ENCODE measurements at regions of chr16 and their contacts with region 1.

Region 1: GRCh38 chr16:28491970-28492474 is at the start of gene CLN3:
- DNase-seq: peak; percentile 96 to 98 (median 97)
- H3K4me3 ChIP-seq: peak within 1 kb of the TSS; percentile 92 to 99 (median 94)
- H3K27ac ChIP-seq: peak within 1 kb of the TSS; percentile 98
- H3K4me1 ChIP-seq: peaks cover 0 to 3% (median 0%) of the 10 kb centered on the region in 3 donors
- H3K27me3 ChIP-seq: no peaks in the 10 kb centered on the region
- CTCF ChIP-seq: no peak
- total RNA-seq, gene CLN3: 35.0 TPM

Region 2: GRCh38 chr16:28549390-28549789 is 57.4 kb after region 1 on chr16:
- intact Hi-C with region 1: loop called (anchors 10 kb)
- DNase-seq: peak in 1 of 5 donors; percentile 46
- H3K4me3 ChIP-seq: no peak overlapping the region
- H3K27ac ChIP-seq: no peak overlapping the region
- H3K4me1 ChIP-seq: peaks cover 0 to under 1% (median 0%) of the 10 kb centered on the region in 3 donors
- H3K27me3 ChIP-seq: no peaks in the 10 kb centered on the region
- CTCF ChIP-seq: peak; percentile 43

Region 3: GRCh38 chr16:28597692-28598261 is 105.8 kb after region 1 on chr16:
- intact Hi-C with region 1: no loop called
- DNase-seq: peak in 4 of 5 donors; percentile 32 to 61 (median 54)
- H3K4me3 ChIP-seq: no peak overlapping the region
- H3K27ac ChIP-seq: no peak overlapping the region
- H3K4me1 ChIP-seq: peaks cover 0 to 8% (median 0%) of the 10 kb centered on the region in 3 donors
- H3K27me3 ChIP-seq: no peaks in the 10 kb centered on the region
- CTCF ChIP-seq: no peak

Region 4: DNA sequence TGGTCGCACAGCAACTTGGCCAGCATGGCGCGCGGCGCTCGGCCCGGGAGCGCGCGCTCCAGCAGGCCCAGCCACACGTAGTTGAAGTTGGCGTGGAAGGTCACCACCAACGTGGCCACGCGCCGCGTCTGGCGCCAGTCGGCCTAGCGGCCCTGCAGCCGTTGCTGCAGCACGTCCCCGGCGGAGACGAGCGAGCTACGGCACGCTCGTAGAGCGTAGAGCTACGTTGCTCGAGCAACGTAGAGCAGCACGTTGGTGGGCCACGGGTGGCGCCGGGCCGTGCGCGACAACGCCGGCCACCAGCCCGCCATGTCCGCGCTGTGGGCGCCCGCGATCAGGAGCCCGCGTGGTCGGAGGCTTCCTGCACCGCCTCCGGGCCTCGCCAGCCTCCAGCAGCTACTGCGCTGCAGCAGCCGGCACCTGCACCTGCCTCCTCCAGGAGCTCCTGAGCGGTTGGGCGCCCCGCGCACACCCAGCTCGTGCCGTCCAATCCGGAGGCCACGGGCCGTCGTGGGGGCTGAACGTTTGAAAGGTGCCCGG is 131.2 kb after region 1 on chr16:
- intact Hi-C with region 1: no loop called
- DNase-seq: peak; percentile 65 to 85 (median 76)
- H3K4me3 ChIP-seq: peak overlapping the region; percentile 41 to 61 (median 55)
- H3K27ac ChIP-seq: no peak overlapping the region
- H3K4me1 ChIP-seq: no peaks in the 10 kb centered on the region
- H3K27me3 ChIP-seq: no peaks in the 10 kb centered on the region
- CTCF ChIP-seq: no peak